Panc1 (cell line): ENCODE measurements at regions of chr18 and their contacts with region 1.

Region 1: GRCh38 chr18:43563780-43564179 is 286.5 kb upstream of the SYT4 start:
- DNase-seq: no peak
- ATAC-seq: no peak
- H3K4me3 ChIP-seq: no peak overlapping the region
- H3K27ac ChIP-seq: no peak overlapping the region
- H3K4me1 ChIP-seq: no peaks in the 10 kb centered on the region
- H3K27me3 ChIP-seq: no peaks in the 10 kb centered on the region
- CTCF ChIP-seq: peak; percentile 35; the same call in 1 of the 2 replicates

Region 2: DNA sequence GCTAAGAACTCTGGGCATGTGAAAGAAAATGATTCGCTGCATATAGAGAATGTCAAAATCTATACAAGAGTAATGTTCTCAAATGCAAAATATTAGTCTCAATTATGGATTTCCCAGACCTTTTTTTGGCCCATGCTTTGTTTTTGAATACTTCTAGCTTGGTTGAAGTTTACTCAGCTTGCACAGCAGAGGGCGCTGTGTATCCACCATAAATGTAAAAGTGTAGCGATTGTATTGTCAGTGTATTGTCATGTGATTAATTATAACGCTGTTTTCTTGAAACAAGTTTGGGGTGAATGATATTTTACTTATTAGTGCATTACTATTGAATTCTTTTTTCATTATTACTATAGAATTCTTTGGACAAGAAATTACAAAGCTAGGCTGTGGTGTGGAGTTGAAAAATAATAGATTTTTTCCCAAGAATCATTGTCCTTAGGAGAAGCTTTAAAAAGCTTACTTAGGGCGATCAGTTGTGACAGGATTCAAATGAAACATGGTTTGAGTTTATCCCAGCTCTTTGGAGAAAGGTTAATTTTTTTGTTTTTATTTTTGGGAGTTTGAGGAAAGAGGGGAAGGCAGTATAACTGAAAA is 1510.5 kb before region 1 on chr18:
- CTCF ChIA-PET with region 1: interaction called, 3 read pairs
- POLR2A ChIA-PET with region 1: no interaction called
- in situ Hi-C with region 1: no loop called
- intact Hi-C with region 1: loop called (anchors 10 kb)
- DNase-seq: no peak
- ATAC-seq: peak; percentile 74; the same call in 1 of the 2 replicates
- H3K4me3 ChIP-seq: no peak overlapping the region
- H3K27ac ChIP-seq: no peak overlapping the region
- H3K4me1 ChIP-seq: no peaks in the 10 kb centered on the region
- H3K27me3 ChIP-seq: no peaks in the 10 kb centered on the region
- CTCF ChIP-seq: peak; percentile 64; the same call in 1 of the 2 replicates

Region 3: DNA sequence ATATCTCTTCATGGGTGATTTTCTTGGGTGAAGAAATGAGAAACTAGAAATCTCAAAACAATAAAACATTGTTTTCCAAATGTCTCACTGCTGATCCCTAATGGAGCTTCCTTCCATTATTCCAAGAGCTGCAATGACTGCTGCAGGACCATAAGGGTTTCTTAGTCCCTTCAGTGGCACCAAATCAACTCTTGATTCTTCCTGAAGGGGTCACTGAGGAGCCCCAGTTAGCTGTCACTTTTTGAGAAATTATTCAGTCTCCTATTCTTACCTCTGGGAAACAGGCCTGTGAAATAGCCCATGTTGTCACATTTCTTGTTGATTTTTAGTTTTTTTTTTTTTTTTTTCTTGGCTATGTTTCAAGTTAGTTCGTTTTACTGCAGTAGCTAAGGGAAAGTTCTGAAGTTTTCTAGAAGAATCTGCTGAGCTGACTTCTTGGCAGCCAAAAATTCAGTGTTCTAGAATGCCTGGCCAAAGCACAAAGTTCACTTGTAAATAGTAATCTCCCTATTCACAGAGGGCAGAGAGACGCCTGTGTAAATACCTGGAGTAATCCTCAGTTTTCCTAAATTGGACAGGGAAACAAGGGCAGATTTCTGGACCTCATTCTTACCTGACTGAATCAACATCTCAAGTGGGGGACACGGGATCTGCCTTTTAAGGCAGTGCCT is 928.3 kb before region 1 on chr18:
- CTCF ChIA-PET with region 1: no interaction called
- POLR2A ChIA-PET with region 1: no interaction called
- in situ Hi-C with region 1: no loop called
- intact Hi-C with region 1: no loop called
- DNase-seq: no peak
- ATAC-seq: no peak
- H3K4me3 ChIP-seq: no peak overlapping the region
- H3K27ac ChIP-seq: no peak overlapping the region
- H3K4me1 ChIP-seq: no peaks in the 10 kb centered on the region
- H3K27me3 ChIP-seq: no peaks in the 10 kb centered on the region
- CTCF ChIP-seq: no peak

Region 4: DNA sequence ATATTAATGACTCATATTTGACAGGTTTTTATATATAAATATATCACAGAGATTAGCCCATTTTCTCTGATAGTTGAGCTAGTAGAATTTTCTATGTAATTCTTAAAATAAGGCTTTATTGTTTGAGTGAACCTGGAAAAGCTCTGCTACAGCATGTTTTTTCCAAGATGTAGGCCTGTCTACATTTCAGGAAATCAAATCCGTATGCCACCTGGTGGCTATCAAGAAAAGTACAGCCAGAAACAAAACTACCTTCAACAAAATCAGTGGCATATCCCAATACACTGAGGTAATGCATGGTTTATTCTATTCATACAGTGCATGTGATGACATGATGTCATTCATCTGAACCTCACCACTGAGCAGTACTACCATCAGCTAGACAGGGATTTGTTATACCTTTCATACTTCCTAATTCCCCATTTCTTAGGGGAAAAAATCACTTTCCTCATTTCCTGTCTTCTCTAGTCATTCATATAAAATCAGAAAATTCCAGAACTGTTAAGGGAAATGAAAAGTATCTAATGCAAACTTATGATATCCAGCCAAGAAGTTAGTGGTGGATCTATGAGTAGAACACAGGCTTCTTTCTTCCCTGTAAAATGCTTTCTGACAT is 23.9 kb after region 1 on chr18:
- CTCF ChIA-PET with region 1: no interaction called
- POLR2A ChIA-PET with region 1: no interaction called
- in situ Hi-C with region 1: no loop called
- intact Hi-C with region 1: no loop called
- DNase-seq: no peak
- ATAC-seq: peak; percentile 74; the same call in 1 of the 2 replicates
- H3K4me3 ChIP-seq: no peak overlapping the region
- H3K27ac ChIP-seq: no peak overlapping the region
- H3K4me1 ChIP-seq: no peaks in the 10 kb centered on the region
- H3K27me3 ChIP-seq: no peaks in the 10 kb centered on the region
- CTCF ChIP-seq: peak; percentile 46; the same call in 1 of the 2 replicates

Region 5: DNA sequence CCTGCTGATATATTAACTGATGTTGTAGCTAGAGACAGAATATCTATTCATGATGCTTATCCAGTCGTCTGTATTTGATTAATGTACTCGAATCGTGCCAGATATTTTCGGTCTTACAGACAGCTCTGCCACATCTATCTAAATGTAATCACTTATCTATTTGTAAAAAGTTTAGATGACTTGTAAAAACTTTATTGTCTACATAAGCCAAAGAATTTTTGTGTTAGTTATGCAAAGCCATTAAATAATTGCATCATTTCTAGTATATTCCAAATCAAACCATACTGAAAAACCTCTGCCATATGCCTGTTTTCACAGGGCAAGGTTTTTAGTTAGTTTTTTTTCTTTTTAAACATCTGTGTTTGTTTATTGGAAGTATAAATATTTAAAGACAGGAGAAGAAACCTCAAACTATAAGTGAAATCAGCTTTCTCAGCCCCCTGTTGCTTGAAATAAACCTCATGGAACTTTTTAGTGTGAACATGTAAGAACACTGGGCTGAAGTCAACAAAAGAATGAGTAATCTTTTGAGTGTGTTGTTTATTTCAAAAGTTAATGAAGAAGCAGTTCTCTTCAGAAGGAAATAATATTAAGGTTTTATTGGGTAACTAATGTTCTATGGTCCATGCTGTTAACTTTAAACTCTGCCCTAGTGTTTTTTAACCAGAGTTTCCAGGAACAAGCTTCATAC is 371.1 kb after region 1 on chr18:
- CTCF ChIA-PET with region 1: no interaction called
- POLR2A ChIA-PET with region 1: no interaction called
- in situ Hi-C with region 1: no loop called
- intact Hi-C with region 1: no loop called
- DNase-seq: no peak
- ATAC-seq: no peak
- H3K4me3 ChIP-seq: no peak overlapping the region
- H3K27ac ChIP-seq: no peak overlapping the region
- H3K4me1 ChIP-seq: no peaks in the 10 kb centered on the region
- H3K27me3 ChIP-seq: no peaks in the 10 kb centered on the region
- CTCF ChIP-seq: no peak